Activated CD4-positive, alpha-beta memory T cell treated with anti-CD3 and anti-CD28 coated beads for 36 hours (primary cell): ENCODE measurements at regions of chr10 and their contacts with region 1.

Region 1: DNA sequence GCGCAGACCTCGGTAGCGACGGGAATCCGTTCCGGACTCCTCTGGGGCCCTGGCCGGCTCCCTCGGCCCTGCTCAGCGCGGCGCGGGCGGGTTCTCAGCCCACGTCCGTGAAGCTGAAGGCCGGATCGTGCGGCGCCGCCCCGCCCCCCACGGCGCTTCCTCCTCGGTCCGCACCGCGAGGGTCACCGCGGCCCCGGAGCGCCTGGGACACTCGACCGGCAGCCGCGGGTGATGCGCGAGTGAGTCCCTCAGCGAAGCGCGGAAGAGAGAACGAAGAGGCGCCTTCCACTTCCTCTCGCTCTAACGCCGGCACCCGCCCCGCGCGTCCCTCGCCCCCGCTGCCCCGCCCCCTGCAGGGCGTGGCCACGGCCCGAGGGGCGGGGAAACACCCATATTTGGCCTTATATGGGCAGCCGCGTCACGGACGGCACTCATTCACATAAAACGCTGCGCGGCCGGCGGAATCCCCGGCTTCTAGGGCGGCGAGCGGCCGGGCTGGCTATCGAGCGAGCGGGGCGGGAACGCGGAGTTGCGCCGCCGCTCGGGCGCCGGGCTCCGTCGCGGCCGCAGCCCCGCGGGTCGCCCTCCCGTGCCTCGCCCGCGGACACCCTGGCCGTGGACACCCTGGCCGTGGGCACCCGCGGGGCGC is at the start of gene DUSP5:
- DNase-seq: peak; percentile 97
- H3K4me3 Mint-ChIP-seq: peak within 1 kb of the TSS; percentile 96
- H3K27ac Mint-ChIP-seq: peak within 1 kb of the TSS; percentile 97
- H3K4me1 Mint-ChIP-seq: peaks cover 48% of the 10 kb centered on the region
- H3K27me3 Mint-ChIP-seq: no peaks in the 10 kb centered on the region
- total RNA-seq, gene DUSP5: 171 to 176 TPM

Region 2: GRCh38 chr10:110007701-110008517 is 489.7 kb before region 1 on chr10 and contains the start of gene ADD3:
- CTCF ChIA-PET with region 1: no interaction called
- POLR2A ChIA-PET with region 1: no interaction called
- intact Hi-C with region 1: loop called (anchors 5 kb)
- DNase-seq: peak; percentile 92
- H3K4me3 Mint-ChIP-seq: no peak within 1 kb of the TSS
- H3K27ac Mint-ChIP-seq: peak within 1 kb of the TSS; percentile 81
- H3K4me1 Mint-ChIP-seq: peaks cover 40% of the 10 kb centered on the region
- H3K27me3 Mint-ChIP-seq: no peaks in the 10 kb centered on the region
- total RNA-seq, gene ADD3: 92.3 to 93.3 TPM

Region 3: DNA sequence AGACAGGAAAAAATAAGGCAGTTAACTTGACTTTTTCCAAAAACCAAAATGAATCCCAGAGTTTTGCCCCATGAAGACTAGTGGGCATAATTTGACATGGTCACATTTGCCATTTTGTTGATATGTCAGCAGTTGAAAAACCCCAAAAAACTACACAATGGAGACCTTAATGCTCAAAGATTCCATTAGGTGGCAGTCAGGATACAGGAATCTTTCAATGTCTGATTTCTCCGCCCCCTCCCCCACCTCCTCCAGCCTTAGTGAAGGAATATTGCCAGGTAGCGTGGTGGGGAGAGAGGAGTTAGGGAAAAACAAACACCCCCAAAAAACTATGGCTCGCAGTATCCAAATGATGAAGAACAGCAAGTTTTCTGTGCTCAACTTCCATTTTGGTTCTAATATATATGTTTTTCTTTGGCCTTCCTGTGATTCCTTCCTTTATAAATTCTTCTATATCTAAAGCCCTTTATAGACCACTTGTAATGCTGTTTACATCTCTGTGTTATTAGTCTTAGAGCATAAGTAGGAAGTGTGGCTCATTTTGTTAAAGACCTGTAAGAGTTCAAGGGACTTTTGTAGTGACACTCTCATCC is 186.1 kb before region 1 on chr10:
- CTCF ChIA-PET with region 1: interaction called, 33 read pairs
- POLR2A ChIA-PET with region 1: no interaction called
- intact Hi-C with region 1: loop called (anchors 1 kb)
- DNase-seq: peak; percentile 52
- H3K4me3 Mint-ChIP-seq: no peak overlapping the region
- H3K27ac Mint-ChIP-seq: peak overlapping the region; percentile 9
- H3K4me1 Mint-ChIP-seq: peaks cover 31% of the 10 kb centered on the region
- H3K27me3 Mint-ChIP-seq: peaks cover 2% of the 10 kb centered on the region

Region 4: GRCh38 chr10:110425684-110426293 is 71.8 kb before region 1 on chr10:
- CTCF ChIA-PET with region 1: interaction called, 3 read pairs
- POLR2A ChIA-PET with region 1: interaction called, 5 read pairs
- intact Hi-C with region 1: loop called (anchors 1 kb)
- DNase-seq: peak; percentile 88
- H3K4me3 Mint-ChIP-seq: peak overlapping the region; percentile 30
- H3K27ac Mint-ChIP-seq: peak overlapping the region; percentile 96
- H3K4me1 Mint-ChIP-seq: peaks cover 66% of the 10 kb centered on the region
- H3K27me3 Mint-ChIP-seq: no peaks in the 10 kb centered on the region

Region 5: DNA sequence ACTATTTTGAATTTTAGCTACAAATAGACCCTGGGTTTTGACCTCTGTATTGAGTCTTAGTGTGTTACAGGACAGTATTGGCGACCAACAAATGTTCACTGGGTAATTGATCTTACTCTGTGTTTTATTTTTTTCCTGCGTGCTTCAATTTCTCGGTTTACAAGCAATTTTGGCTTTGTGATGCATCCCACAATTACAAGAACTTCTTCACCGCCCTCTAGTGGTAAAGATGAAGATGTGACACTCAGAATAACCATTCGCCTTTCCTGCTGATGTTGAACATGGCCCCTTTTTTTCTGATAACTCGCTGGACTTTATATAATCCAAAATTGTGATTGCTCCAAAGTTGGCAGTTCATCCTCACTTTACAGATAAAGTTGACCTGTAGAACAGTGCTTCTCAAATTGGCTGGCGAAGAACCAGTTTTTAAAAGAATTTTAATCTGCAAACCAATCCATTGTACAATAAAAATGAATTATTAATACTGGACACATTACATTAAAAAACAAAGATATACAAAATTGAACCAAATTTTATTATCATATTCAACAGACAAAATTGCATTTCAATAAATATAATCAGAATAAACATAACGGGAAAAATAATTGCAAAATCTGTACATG is 49.7 kb after region 1 on chr10:
- CTCF ChIA-PET with region 1: interaction called, 20 read pairs
- POLR2A ChIA-PET with region 1: interaction called, 6 read pairs
- intact Hi-C with region 1: loop called (anchors 1 kb)
- DNase-seq: no peak
- H3K4me3 Mint-ChIP-seq: no peak overlapping the region
- H3K27ac Mint-ChIP-seq: no peak overlapping the region
- H3K4me1 Mint-ChIP-seq: peaks cover 10% of the 10 kb centered on the region
- H3K27me3 Mint-ChIP-seq: peaks cover 12% of the 10 kb centered on the region

Region 6: DNA sequence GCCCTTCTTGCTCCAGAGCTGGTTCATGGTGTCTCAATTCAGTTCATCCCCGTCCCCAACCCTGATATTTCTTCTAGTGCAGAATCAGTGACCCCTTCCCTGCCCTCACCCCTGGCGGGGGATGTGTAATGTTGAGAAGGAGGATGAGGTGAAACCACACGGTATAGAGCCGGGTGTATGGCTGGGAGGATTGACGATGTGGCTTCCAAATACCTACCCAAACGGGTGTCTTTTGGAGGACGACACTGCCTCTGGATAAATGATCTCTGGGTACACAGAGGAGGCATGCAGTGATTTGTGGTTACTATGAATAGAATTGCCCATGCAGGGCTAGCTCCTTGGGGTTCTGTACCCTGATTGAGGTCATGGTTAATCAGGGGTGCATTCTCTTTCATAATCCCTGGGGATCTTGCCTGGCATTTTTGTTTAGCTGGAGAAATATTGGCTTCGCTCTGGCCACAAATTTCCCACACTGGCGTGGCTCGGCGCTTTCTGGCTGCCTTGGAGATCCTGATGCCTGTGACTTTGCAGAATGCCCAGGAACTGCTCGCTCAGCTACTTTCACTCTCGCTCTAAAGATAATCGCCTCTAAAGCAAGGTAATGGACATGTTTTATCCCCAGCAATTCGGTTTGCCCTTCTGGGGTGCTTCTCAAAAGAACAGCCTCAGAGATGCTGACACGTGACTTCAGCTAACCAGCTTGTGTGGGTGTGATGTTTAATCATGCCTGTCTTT is 235.8 kb after region 1 on chr10:
- CTCF ChIA-PET with region 1: no interaction called
- POLR2A ChIA-PET with region 1: no interaction called
- intact Hi-C with region 1: no loop called
- DNase-seq: no peak
- H3K4me3 Mint-ChIP-seq: peak overlapping the region; percentile 49
- H3K27ac Mint-ChIP-seq: no peak overlapping the region
- H3K4me1 Mint-ChIP-seq: peaks cover 9% of the 10 kb centered on the region
- H3K27me3 Mint-ChIP-seq: peaks cover 4% of the 10 kb centered on the region

Region 7: DNA sequence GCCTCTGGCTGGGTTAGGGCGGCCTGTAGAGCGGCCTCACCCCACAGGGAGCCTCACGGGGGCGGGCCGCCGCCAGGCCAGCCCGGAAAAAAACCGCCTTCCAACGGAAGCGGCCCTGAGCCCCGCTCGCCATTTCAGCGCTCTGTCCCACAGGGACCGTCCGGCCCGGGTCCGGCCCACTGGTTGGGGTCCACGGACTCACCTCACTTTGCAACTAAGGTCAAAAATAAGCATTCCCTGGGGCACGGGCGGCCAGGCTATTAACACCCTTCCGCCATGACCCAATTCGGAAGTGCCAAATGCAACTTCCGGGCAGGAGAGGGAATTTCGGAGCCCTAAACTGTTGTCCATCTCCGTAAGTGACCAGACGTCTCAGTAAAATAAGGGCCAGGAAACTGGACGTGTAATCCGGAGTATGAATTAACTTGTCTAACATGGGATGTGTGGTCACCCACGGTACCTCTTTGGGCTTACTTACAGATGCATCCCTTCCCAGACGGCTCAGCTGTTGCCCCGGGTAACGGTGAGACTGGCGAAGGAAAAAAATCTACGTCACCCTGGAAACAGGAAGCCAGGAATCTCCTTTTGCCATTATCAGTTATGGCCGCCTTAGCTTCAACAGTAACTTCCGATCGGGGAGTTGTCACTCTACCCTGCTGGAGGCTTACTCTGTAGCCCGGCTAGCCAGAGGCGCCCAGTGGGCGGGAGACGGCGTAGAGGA is 421.2 kb after region 1 on chr10 and contains the start of gene BBIP1:
- CTCF ChIA-PET with region 1: no interaction called
- POLR2A ChIA-PET with region 1: no interaction called
- intact Hi-C with region 1: loop called (anchors 2 kb)
- DNase-seq: no peak
- H3K4me3 Mint-ChIP-seq: peak within 1 kb of the TSS; percentile 92
- H3K27ac Mint-ChIP-seq: peak within 1 kb of the TSS; percentile 99
- H3K4me1 Mint-ChIP-seq: peaks cover 39% of the 10 kb centered on the region
- H3K27me3 Mint-ChIP-seq: no peaks in the 10 kb centered on the region
- total RNA-seq, gene BBIP1: 36.4 to 43.9 TPM